Dendritic cell treated with granulocyte-macrophage colony-stimulating factor and Interleukin-4, amounts not matched to agents 40 ng/mL and 50 ng/mL, for 4 days (primary cell): ENCODE measurements at regions of chr1 and their contacts with region 1.

Region 1: GRCh38 chr1:151327223-151327902 is at the start of gene PI4KB:
- H3K4me3 Mint-ChIP-seq: peak within 1 kb of the TSS; percentile 90
- H3K27ac Mint-ChIP-seq: peak within 1 kb of the TSS; percentile 90
- H3K4me1 Mint-ChIP-seq: peaks cover 48% of the 10 kb centered on the region
- H3K27me3 Mint-ChIP-seq: no peaks in the 10 kb centered on the region

Region 2: GRCh38 chr1:151281969-151282882 is 45.1 kb before region 1 on chr1 and contains the start of gene ZNF687:
- intact Hi-C with region 1: loop called (anchors 2 kb)
- H3K4me3 Mint-ChIP-seq: peak within 1 kb of the TSS; percentile 97
- H3K27ac Mint-ChIP-seq: peak within 1 kb of the TSS; percentile 96
- H3K4me1 Mint-ChIP-seq: peaks cover 37% of the 10 kb centered on the region
- H3K27me3 Mint-ChIP-seq: no peaks in the 10 kb centered on the region

Region 3: GRCh38 chr1:151311589-151312331 is 15.6 kb before region 1 on chr1:
- intact Hi-C with region 1: loop called (anchors 1 kb)
- H3K4me3 Mint-ChIP-seq: no peak overlapping the region
- H3K27ac Mint-ChIP-seq: peak overlapping the region; percentile 65
- H3K4me1 Mint-ChIP-seq: peaks cover 54% of the 10 kb centered on the region
- H3K27me3 Mint-ChIP-seq: no peaks in the 10 kb centered on the region

Region 4: GRCh38 chr1:151346769-151347522 is 19.6 kb after region 1 on chr1 and contains the start of gene RFX5:
- intact Hi-C with region 1: loop called (anchors 2 kb)
- H3K4me3 Mint-ChIP-seq: peak within 1 kb of the TSS; percentile 85
- H3K27ac Mint-ChIP-seq: peak within 1 kb of the TSS; percentile 97
- H3K4me1 Mint-ChIP-seq: peaks cover 60% of the 10 kb centered on the region
- H3K27me3 Mint-ChIP-seq: no peaks in the 10 kb centered on the region

Region 5: DNA sequence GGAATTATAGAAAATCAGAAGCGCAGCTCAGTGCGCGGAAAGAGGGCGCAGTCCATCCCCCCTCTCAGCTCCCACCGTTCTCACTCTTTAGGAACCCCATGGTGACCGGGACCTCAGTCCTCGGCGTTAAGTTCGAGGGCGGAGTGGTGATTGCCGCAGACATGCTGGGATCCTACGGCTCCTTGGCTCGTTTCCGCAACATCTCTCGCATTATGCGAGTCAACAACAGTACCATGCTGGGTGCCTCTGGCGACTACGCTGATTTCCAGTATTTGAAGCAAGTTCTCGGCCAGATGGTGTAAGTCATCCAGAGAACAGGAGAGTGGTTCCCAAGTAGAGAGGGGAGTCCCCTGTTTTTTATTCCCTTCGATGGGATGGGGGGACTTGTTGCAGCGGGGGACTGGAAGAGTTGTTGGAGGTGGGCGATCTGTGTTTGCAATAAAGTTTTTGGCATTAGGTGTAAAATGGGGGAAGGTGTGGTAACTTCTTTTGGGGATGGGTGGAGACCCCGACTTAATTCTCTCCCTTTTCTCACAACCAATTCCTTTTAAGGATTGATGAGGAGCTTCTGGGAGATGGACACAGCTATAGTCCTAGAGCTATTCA is 72.6 kb after region 1 on chr1:
- intact Hi-C with region 1: loop called (anchors 1 kb)
- H3K4me3 Mint-ChIP-seq: peak overlapping the region; percentile 91
- H3K27ac Mint-ChIP-seq: peak overlapping the region; percentile 99
- H3K4me1 Mint-ChIP-seq: peaks cover 18% of the 10 kb centered on the region
- H3K27me3 Mint-ChIP-seq: peaks cover 5% of the 10 kb centered on the region